WTC11 (cell line): ENCODE measurements at regions of chr17 and their contacts with region 1.

Region 1: DNA sequence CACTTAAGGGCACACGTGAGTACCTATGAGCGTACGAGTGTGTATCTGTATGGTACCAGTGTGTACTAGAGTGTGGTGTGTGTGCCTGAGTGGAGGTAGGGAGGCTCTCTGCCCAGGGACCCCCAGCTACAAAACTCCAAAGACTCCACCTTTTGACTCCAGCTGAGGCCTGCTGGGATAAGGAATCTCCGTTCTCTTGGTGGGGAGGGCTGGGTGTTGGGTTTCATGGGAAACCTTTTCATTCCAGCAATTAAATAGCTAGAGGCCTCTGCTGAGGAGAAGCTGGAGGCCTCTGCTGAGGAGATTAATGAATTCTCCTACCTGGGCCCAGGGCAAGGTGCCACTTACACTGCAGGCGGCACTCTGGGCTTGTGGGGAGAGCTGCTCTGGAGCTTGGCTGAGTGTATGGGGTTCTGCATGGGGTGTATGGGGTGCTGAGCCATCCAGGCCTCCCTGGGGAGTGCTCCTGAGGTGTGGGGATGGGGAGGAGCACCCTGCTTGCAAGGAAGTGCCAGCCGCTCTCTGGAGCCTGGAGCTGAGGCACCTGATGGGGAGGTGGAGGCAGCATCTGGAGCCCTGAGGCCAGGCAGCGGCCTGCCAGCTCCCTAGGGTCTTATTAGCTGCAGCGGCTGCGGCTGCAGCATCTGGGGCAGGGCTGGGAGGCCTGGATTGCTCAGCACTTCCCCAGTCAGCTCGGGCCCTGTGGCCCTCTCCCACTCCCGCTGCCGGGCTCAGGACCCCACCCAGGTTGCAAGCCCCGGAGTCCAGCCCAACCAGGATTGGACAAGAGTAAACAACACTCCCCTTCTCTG is 4.6 kb downstream of the ANKRD13B start:
- DNase-seq: no peak
- ATAC-seq: peak; percentile 16
- H3K4me3 Mint-ChIP-seq: peak overlapping the region; percentile 46
- H3K27ac Mint-ChIP-seq: peak overlapping the region; percentile 74; the same call in 1 of the 2 replicates
- H3K4me1 Mint-ChIP-seq: peaks cover 44% of the 10 kb centered on the region
- H3K27me3 Mint-ChIP-seq: no peaks in the 10 kb centered on the region
- CTCF ChIP-seq: no peak

Region 2: DNA sequence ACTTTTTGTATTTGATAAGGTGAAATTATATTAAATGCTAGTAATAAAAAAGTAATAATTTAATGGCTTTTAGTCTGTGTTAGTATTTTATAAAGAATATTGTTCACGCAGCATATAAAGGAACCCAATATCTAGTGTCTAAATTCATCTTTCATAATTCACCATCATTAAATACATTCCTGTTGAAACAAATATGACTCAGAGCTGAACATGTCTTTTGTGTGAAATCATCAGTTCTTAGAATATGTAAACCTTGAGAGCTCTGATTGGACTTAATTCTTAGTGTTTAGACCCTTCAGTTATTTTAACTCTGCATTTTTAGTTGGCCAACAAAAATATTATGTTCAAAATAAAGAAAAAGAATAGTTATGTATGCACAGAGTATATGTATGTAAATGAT is 102.6 kb before region 1 on chr17:
- CTCF ChIA-PET with region 1: no interaction called
- POLR2A ChIA-PET with region 1: no interaction called
- DNase-seq: no peak
- ATAC-seq: no peak
- H3K4me3 Mint-ChIP-seq: no peak overlapping the region
- H3K27ac Mint-ChIP-seq: no peak overlapping the region
- H3K4me1 Mint-ChIP-seq: no peaks in the 10 kb centered on the region
- H3K27me3 Mint-ChIP-seq: no peaks in the 10 kb centered on the region
- CTCF ChIP-seq: no peak

Region 3: GRCh38 chr17:29524460-29525091 is 73.0 kb before region 1 on chr17:
- CTCF ChIA-PET with region 1: no interaction called
- POLR2A ChIA-PET with region 1: no interaction called
- DNase-seq: no peak
- ATAC-seq: no peak
- H3K4me3 Mint-ChIP-seq: no peak overlapping the region
- H3K27ac Mint-ChIP-seq: no peak overlapping the region
- H3K4me1 Mint-ChIP-seq: no peaks in the 10 kb centered on the region
- H3K27me3 Mint-ChIP-seq: no peaks in the 10 kb centered on the region
- CTCF ChIP-seq: no peak

Region 4: DNA sequence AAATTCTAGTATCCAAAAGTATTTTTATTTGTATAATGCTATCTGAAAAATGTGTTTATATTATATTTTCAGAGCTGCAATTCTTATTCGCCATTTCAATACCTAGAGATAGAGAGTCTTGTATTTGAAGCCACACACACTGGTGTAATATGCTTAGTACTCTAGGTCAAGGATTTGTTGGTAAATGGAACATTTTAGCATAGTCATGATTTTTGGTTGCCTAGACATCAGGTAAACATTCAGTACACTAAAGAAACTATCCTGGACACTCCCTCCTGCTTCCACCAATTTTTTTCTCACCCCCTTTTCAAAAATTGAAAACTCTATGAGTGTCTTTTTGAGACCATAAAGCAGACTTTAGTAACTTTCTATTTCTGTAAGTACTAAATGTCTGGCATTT is 51.5 kb before region 1 on chr17:
- CTCF ChIA-PET with region 1: no interaction called
- POLR2A ChIA-PET with region 1: no interaction called
- DNase-seq: no peak
- ATAC-seq: no peak
- H3K4me3 Mint-ChIP-seq: no peak overlapping the region
- H3K27ac Mint-ChIP-seq: no peak overlapping the region
- H3K4me1 Mint-ChIP-seq: peaks cover 18% of the 10 kb centered on the region
- H3K27me3 Mint-ChIP-seq: no peaks in the 10 kb centered on the region
- CTCF ChIP-seq: no peak

Region 5: DNA sequence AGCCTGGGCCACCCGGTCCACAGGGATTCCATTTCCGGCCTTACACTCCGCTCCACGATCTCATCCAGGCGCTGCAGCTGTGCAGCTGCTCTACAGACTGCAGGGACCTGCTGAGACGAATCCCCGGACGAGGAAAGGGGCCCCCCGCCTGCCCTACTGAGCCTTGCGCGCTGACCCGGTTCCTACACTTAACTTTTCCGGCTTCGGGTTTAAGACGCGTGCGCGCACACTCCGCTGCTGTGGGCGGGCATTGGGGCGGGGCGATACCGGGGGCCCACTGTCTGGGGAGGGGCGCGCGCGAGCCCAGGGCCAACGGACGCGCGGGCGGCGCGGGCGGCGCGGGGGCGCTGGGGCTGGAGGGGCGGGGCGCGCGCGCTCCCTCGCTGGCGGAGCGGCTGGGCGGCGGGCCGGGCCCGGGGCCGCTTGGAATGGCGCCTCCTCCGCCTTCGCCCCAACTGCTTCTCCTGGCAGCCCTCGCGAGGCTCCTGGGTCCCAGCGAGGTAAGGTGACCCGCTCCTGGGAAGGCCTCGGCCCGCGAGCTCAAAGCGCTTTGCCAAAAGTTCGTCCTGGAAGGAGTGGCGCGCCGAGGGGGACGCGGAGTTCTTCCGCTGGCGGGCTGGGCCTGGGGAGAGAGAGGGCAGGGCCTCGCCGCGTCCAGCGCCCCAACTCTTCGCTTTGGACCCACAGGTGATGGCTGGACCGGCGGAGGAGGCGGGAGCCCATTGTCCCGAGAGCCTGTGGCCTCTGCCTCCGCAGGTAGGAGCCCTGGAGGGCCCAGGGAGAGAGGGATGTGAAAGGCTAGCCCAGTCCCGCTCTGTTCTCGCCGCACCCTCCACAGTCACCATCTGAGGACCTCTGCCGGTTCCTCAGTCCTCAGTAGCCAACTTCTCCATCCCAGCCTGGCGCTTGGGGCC is 29.0 kb before region 1 on chr17 and contains the start of gene TP53I13:
- CTCF ChIA-PET with region 1: interaction called, 65 read pairs
- POLR2A ChIA-PET with region 1: interaction called, 5 read pairs
- DNase-seq: peak; percentile 89
- ATAC-seq: peak; percentile 50
- H3K4me3 Mint-ChIP-seq: peak within 1 kb of the TSS; percentile 91
- H3K27ac Mint-ChIP-seq: peak within 1 kb of the TSS; percentile 95
- H3K4me1 Mint-ChIP-seq: peaks cover 16% of the 10 kb centered on the region
- H3K27me3 Mint-ChIP-seq: peaks cover 44% of the 10 kb centered on the region
- CTCF ChIP-seq: no peak
- total RNA-seq, gene TP53I13: 33.1 to 41.9 TPM (median 36.7 TPM) in 3 replicates